WTC11 (cell line): ENCODE measurements at regions of chr12 and their contacts with region 1.

Region 1: GRCh38 chr12:124940549-124941527 is 26.4 kb upstream of the UBC start:
- DNase-seq: peak; percentile 88
- ATAC-seq: peak; percentile 39
- H3K4me3 Mint-ChIP-seq: no peak overlapping the region
- H3K27ac Mint-ChIP-seq: no peak overlapping the region
- H3K4me1 Mint-ChIP-seq: peaks cover 14% of the 10 kb centered on the region
- H3K27me3 Mint-ChIP-seq: no peaks in the 10 kb centered on the region
- CTCF ChIP-seq: peak; percentile 61

Region 2: DNA sequence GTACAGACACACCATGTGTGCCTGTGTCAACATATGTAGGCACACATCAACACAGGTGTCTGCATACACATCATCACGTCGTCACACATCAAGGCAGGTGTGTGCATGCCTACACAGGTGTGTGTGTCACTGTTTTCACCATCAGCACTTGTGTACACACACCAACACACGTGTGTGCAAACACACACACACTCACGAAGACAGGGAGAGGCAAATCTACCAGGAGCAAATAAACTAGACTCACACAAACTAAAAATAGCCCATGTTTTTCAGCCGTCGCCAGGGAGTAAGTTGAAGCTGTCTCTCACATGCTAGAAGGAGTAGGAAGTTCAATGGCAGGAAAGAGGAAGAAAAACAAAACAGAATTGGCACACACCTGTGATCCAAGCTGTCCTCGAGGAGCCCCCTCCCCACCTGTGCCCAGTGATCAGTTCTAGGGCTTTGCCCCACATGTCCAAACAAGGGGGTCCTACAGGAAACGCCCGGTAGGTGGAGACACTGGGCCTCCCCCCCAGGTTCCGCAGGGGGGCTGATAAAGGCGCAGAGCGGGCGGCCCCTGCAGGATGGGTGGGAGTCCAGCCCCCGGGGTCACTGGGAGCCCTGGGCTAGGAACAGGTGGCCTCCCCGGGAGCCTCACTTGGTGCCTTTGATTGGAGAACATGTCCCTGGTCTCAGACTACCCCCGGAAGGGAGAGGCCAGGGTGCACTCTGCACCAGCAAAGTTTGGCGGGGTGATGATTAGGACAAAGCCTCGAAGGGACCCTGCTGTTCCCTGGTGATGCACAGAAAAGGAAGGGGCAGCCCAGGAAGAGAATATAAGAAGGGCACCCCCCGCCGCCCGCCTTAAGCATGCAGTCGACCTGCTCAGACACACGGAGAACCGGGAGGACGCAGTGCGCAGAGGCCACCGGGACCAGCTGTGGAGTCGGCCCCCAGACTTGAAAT is 84.3 kb before region 1 on chr12:
- CTCF ChIA-PET with region 1: no interaction called
- POLR2A ChIA-PET with region 1: no interaction called
- DNase-seq: no peak
- ATAC-seq: peak; percentile 51
- H3K4me3 Mint-ChIP-seq: no peak overlapping the region
- H3K27ac Mint-ChIP-seq: peak overlapping the region; percentile 83
- H3K4me1 Mint-ChIP-seq: peaks cover 27% of the 10 kb centered on the region
- H3K27me3 Mint-ChIP-seq: no peaks in the 10 kb centered on the region
- CTCF ChIP-seq: no peak

Region 3: GRCh38 chr12:124917135-124917840 is 23.6 kb before region 1 on chr12:
- CTCF ChIA-PET with region 1: interaction called, 35 read pairs
- POLR2A ChIA-PET with region 1: interaction called, 10 read pairs
- DNase-seq: peak; percentile 95
- ATAC-seq: peak; percentile 87
- H3K4me3 Mint-ChIP-seq: peak overlapping the region; percentile 82
- H3K27ac Mint-ChIP-seq: peak overlapping the region; percentile 100
- H3K4me1 Mint-ChIP-seq: peaks cover 82% of the 10 kb centered on the region
- H3K27me3 Mint-ChIP-seq: no peaks in the 10 kb centered on the region
- CTCF ChIP-seq: no peak

Region 4: DNA sequence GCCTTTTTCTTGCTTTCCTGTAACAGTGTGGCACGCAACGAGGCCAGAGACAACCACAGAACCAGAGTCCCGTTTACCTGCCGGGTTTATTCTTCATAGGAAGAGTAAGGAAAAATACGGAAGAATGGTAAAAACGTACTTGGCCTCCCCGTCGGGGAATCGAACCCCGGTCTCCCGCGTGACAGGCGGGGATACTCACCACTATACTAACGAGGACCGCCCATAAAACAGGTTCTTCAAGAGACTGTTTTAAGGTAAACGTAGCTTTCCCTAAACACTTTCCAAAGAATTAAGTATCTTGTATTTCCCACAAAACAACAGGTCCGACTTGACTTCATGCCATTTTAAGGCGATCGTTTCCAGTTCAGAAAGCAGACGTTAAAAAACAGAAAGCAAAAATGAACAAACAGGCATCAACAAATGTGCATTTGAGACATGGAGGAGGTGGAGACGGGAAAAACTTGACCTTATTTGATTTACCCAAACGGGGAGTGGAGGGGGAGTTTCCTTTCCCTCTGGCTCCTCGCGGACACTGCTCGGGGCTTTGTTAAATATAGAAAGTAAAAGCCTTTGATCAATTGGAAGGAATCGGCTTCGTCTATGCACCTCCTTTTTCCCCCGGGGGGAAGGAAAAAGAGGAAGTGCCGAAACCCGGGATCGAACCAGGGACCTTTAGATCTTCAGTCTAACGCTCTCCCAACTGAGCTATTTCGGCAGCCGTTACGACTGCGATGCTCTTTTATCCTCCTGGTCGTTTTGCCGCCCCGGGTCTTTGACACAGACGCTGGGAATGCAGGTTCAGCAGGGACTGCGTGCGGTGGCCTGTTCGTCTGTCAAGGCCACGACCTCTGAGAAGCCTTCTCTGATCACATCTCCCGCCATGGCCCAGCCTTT is 13.4 kb before region 1 on chr12:
- CTCF ChIA-PET with region 1: interaction called, 12 read pairs
- POLR2A ChIA-PET with region 1: interaction called, 6 read pairs
- DNase-seq: peak; percentile 94
- ATAC-seq: peak; percentile 75
- H3K4me3 Mint-ChIP-seq: peak overlapping the region; percentile 99
- H3K27ac Mint-ChIP-seq: peak overlapping the region; percentile 96
- H3K4me1 Mint-ChIP-seq: peaks cover 15% of the 10 kb centered on the region
- H3K27me3 Mint-ChIP-seq: peaks cover 4% of the 10 kb centered on the region
- CTCF ChIP-seq: no peak

Region 5: GRCh38 chr12:124992874-124993625 is 52.2 kb after region 1 on chr12:
- CTCF ChIA-PET with region 1: interaction called, 11 read pairs
- POLR2A ChIA-PET with region 1: interaction called, 3 read pairs
- DNase-seq: peak; percentile 92
- ATAC-seq: peak; percentile 48
- H3K4me3 Mint-ChIP-seq: peak overlapping the region; percentile 80
- H3K27ac Mint-ChIP-seq: peak overlapping the region; percentile 78
- H3K4me1 Mint-ChIP-seq: peaks cover 28% of the 10 kb centered on the region
- H3K27me3 Mint-ChIP-seq: no peaks in the 10 kb centered on the region
- CTCF ChIP-seq: no peak

Region 6: GRCh38 chr12:125065021-125065795 is 124.4 kb after region 1 on chr12 and contains the start of gene AACS:
- CTCF ChIA-PET with region 1: interaction called, 10 read pairs
- POLR2A ChIA-PET with region 1: interaction called, 3 read pairs
- DNase-seq: peak; percentile 84
- ATAC-seq: peak; percentile 86
- H3K4me3 Mint-ChIP-seq: peak within 1 kb of the TSS; percentile 89
- H3K27ac Mint-ChIP-seq: peak within 1 kb of the TSS; percentile 89
- H3K4me1 Mint-ChIP-seq: peaks cover 47% of the 10 kb centered on the region
- H3K27me3 Mint-ChIP-seq: 0 out of 2 replicates have a peak, but pooled peaks cover 3% of the 10 kb centered on the region
- CTCF ChIP-seq: no peak
- total RNA-seq, gene AACS: 44.1 to 54.0 TPM (median 47.0 TPM) in 3 replicates